Posterior cingulate gyrus (tissue), 11 donors: ENCODE measurements at regions of chr19 and their contacts with region 1.

Region 1: DNA sequence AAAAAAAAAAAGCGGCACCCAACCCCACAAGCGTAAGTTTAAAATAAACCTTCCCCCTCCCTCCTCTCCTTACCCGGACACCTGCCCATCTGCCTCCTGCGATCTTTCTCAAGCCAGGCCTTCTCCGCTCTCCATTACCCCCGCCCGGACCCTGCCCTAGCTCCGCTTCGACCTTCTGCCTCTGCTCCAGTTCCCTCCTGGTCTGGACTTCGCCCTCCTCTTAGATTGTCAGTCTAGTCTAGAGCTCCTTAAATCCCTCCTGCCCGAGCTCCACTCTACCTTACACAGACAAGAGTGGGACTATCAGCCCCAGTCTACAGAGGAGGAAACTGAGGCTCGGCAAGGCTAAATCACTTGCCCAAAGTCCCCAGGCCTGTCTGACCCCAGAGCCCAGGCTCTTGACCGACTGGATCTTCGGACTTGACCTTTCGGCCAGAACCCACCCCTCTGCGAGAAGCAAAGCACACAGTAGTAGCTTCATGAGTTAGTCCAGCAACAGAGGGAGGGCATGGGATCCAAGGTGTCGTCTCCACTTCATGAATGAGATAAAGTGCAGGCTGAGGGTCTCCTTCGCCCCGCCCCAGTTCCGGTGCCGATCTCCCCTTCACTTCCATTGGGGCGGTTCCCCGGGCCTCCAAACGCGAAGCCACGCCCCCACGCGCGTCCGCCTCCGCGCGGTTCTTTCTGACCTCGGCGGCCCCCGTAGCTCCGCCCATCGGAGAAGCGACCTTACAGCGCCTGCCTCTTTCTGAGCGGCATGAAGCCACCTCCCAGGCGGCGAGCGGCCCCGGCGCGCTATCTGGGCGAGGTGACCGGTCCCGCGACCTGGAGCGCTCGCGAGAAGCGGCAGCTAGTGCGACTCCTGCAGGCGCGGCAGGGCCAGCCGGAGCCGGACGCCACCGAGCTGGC is at the start of gene SNAPC2:
- DNase-seq: peak; percentile 87 to 99 (median 92)

Region 2: DNA sequence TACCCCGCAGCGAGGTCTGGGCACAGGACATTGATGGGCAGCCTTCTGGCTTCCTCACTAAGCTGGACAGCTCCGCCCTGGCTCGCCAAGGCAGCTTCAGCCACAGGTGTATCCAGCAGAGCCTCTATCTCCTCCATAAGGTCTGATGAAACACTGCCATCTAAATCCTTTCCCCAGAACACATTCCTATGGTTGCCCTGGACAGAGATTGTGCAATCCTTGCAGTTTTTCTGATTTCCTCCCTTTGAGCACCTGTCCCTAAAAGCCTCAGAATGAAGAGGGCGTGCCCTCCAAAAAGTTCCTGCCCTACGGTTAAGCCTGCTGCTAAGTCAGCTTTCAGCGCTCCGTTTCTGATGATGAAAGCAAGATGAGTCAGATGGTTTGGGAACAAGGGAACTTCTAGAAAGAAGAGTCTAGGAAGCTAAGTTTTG is 135.9 kb before region 1 on chr19:
- intact Hi-C with region 1: no loop called
- DNase-seq: peak in 1 of 10 donors; percentile 49

Region 3: DNA sequence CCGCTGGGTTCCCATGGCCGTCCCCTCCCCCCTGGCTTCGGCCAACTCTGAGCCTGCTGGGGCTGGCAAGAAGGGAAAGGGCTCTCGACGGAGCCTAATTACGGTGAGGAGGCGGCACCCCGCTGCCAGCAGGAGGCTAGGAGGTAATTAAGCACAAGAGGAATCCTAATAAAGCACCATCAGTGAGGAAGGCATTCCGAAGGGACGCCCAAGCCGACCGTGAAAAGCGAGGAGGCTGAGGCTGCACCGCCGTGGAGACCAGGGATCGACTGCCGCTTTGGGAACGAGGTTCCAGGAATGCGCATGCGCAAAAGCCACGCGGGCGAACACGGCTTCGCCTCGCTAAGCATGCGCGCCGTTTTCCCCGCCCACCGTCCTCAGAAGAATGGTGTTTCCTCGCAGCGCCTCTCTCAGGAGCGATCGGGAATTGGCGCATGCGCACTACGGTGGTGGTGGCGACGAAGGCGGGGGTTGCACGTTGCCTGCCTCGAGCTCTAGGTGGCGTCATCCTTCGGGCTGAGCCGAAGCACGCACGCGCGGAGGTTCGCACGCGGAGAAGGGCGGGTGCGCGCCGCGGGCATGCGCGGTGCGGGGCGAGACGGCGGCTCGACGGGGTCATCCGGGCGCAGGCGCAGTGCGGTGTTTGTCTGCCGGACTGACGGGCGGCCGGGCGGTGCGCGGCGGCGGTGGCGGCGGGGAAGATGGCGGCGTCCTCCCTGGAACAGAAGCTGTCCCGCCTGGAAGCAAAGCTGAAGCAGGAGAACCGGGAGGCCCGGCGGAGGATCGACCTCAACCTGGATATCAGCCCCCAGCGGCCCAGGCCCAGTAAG is 16.4 kb before region 1 on chr19 and contains the start of gene MAP2K7:
- intact Hi-C with region 1: loop called (anchors 2 kb)
- DNase-seq: peak; percentile 98 to 100 (median 100)